ENCODE measurements at regions of chr2 and their contacts with region 1.

Region 1: GRCh38 chr2:74653985-74654882 is at the start of gene SEMA4F:
- DNase-seq: peak; percentile 92
- H3K4me3 Mint-ChIP-seq: peak within 1 kb of the TSS; percentile 89
- H3K27ac Mint-ChIP-seq: peak within 1 kb of the TSS; percentile 4
- H3K4me1 Mint-ChIP-seq: peaks cover 12% of the 10 kb centered on the region
- H3K27me3 Mint-ChIP-seq: peaks cover 37% of the 10 kb centered on the region
- total RNA-seq, gene SEMA4F: 2.4 and 3.2 TPM in 2 replicates

Region 2: DNA sequence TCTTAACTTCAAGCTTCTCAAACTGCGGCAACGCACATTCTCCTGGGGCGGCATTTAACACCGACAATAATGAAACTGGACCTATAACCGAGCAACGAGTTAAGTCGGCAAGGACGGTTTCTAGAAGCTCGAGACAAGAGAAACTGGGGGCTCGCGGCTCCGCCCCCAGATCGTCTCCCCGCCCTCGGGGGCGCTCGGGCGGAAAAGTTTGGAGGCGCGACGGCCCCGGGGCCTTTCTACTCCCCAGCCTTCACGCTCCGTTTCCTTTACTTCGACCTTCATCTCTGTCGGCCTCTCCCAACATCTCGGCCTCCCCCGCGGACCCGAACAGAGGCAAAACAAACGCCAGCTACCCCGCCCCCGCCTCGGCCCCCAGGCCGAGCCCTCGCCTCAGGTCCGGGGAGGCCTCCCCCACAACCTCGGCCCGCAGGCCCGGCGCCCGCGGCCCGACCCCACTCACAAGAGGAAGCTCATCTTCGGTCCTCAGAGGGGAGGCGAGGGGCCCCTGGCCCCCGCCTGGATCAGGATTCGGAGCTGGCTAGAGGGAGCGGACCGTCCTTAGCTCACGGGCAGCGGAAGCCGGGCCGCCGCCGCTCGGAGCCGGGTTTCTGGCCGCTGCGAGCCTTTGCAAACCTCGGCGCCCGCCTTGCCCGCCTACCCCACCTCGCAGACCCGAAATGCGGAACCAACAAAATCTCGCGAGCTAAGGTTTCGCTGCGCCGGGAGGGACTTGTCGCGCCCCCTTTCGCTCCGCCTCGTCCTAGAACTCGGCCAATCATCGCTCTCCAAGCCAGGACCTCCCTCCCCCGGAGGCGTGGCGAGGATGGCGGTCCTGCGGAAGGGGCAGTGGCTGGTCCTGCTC is 475.8 kb before region 1 on chr2 and contains the start of gene MOB1A:
- intact Hi-C with region 1: loop called (anchors 1 kb)
- DNase-seq: peak; percentile 99
- H3K4me3 Mint-ChIP-seq: peak within 1 kb of the TSS; percentile 88
- H3K27ac Mint-ChIP-seq: peak within 1 kb of the TSS; percentile 85
- H3K4me1 Mint-ChIP-seq: peaks cover 40% of the 10 kb centered on the region
- H3K27me3 Mint-ChIP-seq: no peaks in the 10 kb centered on the region
- total RNA-seq, gene MOB1A: 207 and 221 TPM in 2 replicates

Region 3: DNA sequence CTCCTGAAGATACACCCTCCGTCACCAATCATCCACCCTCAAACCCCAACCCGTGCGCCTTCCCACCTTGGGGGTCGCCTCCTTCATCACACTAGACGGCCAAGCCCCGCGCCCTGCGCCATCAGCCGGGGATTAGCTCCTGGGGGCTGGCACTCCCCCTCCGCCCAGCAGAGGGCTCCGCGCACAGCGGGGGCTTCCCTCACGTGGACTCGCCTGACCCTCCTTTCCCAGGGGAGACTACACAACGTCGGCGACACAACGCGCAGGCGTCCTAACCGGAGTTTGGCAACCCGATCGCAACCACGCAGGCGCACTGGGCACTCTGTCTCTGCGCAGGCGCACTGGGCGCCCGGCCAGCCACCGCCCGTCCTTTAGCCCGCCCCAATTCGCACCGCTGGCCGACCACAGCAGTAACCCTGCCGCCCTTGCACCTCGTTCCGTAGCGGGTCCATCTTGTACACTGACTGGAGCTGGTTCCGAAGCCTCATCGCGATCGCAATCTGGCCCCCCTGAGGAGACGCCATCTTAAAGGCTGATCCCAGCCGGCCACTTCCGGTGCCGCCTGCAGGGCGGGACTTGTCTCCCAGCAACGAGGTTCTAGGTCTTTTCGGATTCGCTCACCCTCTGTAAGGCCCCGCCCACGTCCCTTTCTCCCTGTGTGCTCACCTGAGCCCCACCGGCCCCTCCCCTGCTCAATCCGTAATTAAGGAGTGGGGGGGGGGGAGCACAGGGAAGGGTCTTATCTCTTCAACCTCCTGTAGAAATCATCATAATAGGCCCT is 146.9 kb before region 1 on chr2 and contains the start of gene PCGF1:
- intact Hi-C with region 1: loop called (anchors 2 kb)
- DNase-seq: peak; percentile 96
- H3K4me3 Mint-ChIP-seq: peak within 1 kb of the TSS; percentile 96
- H3K27ac Mint-ChIP-seq: peak within 1 kb of the TSS; percentile 99
- H3K4me1 Mint-ChIP-seq: peaks cover 55% of the 10 kb centered on the region
- H3K27me3 Mint-ChIP-seq: peaks cover 24% of the 10 kb centered on the region
- total RNA-seq, gene PCGF1: 41.9 and 45.0 TPM in 2 replicates

Region 4: GRCh38 chr2:74573747-74574562 is 80.3 kb before region 1 on chr2:
- intact Hi-C with region 1: loop called (anchors 1 kb)
- DNase-seq: peak; percentile 31
- H3K4me3 Mint-ChIP-seq: peak overlapping the region; percentile 20
- H3K27ac Mint-ChIP-seq: peak overlapping the region; percentile 27
- H3K4me1 Mint-ChIP-seq: peaks cover 53% of the 10 kb centered on the region
- H3K27me3 Mint-ChIP-seq: no peaks in the 10 kb centered on the region

Region 5: DNA sequence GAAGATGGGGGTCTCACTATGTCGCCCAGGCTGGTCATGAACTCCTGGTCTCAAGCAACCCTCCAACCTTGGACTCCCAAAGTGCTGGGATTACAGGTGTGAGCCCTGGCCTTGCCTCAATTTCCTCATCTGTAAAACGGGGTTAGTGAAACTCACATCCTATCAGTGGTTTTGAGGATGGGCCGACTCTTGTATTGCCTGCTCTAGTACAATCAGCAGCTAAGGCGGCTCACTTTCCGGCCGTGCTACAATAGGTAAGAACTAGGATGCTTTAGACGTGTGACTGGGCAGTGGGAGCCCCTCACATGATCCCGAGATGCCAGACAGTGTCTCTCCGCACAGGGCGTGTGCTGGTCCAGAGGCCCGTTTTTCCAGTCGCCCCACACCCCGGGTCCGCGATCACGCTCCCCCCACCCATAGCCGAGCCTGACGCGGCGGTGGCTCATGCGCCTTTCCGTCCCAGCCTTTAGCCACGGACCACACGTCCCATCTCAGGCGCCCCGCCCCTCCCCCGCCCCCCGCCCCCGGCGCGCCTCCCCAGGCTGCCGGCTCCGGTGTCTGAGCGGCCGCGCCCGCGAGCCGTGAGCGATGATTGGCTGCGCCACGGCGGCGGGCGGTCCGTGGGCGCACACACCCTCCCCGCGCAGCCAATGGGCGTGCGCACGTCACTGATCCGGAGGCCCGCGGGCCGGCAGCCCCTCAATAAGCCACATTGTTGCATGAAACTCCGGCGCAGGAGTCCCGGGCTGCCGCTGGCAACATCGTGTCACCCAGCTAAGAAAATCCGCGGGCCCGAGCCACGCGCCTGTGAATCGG is 179.4 kb after region 1 on chr2 and contains the start of gene HK2:
- intact Hi-C with region 1: loop called (anchors 1 kb)
- DNase-seq: peak; percentile 85
- H3K4me3 Mint-ChIP-seq: peak within 1 kb of the TSS; percentile 96
- H3K27ac Mint-ChIP-seq: peak within 1 kb of the TSS; percentile 96
- H3K4me1 Mint-ChIP-seq: peaks cover 58% of the 10 kb centered on the region
- H3K27me3 Mint-ChIP-seq: peaks cover 3% of the 10 kb centered on the region
- total RNA-seq, gene HK2: 92.2 and 94.5 TPM in 2 replicates

Measured in activated T-helper 1 cell treated with anti-CD3 and anti-CD28 coated beads, Interleukin-12 subunit alpha, Interleukin-12 subunit beta, Interleukin-2, Interleukin-4 antibody, amounts not matched to agents 30 ng/mL and 10 ng/mL and 1 ng/mL, durations not matched to agents 14 hours and 24 hours and 36 hours (primary cell).